ENCODE measurements at regions of chr6 and their contacts with region 1.

Region 1: DNA sequence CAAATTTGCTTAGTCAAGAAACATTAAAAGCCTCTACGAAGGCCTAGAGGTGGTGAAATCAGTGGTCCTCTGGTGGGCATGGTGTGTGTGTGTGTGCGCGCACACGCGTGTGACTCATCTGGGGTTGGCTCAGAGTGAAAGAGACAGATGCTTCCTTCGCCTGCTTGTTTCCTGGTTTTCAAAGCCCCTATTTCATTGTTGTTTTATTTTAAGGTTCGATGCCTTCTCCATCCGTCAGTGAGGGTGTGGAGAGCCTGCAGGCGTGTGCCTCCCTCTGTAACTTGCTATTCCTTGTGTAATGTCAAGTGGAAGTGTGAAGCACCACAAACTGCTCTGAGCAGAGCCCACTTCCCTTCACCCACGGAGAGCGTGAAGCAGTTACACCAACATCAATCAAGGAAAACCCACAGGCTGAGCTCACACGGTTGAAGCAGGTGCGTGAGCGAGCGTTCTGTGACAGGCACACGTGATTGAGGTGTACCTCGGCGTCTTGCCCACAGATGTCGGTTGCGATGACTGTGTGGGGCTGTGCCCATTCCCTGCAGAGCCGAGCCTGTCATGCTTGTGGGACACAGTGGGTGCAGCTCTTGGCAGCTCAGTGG is 233.9 kb downstream of the PRL start:
- DNase-seq: peak; percentile 68
- H3K4me3 Mint-ChIP-seq: peak overlapping the region; percentile 67
- H3K27ac Mint-ChIP-seq: peak overlapping the region; percentile 97
- H3K4me1 Mint-ChIP-seq: peaks cover 69% of the 10 kb centered on the region
- H3K27me3 Mint-ChIP-seq: no peaks in the 10 kb centered on the region

Region 2: GRCh38 chr6:20589266-20589665 is 1473.6 kb before region 1 on chr6:
- intact Hi-C with region 1: loop called (anchors 10 kb)
- DNase-seq: no peak
- H3K4me3 Mint-ChIP-seq: no peak overlapping the region
- H3K27ac Mint-ChIP-seq: no peak overlapping the region
- H3K4me1 Mint-ChIP-seq: peaks cover 26% of the 10 kb centered on the region
- H3K27me3 Mint-ChIP-seq: no peaks in the 10 kb centered on the region

Region 3: GRCh38 chr6:21664314-21665109 is 398.4 kb before region 1 on chr6:
- intact Hi-C with region 1: loop called (anchors 10 kb)
- DNase-seq: no peak
- H3K4me3 Mint-ChIP-seq: peak overlapping the region; percentile 75
- H3K27ac Mint-ChIP-seq: no peak overlapping the region
- H3K4me1 Mint-ChIP-seq: peaks cover 16% of the 10 kb centered on the region
- H3K27me3 Mint-ChIP-seq: peaks cover 62% of the 10 kb centered on the region

Region 4: DNA sequence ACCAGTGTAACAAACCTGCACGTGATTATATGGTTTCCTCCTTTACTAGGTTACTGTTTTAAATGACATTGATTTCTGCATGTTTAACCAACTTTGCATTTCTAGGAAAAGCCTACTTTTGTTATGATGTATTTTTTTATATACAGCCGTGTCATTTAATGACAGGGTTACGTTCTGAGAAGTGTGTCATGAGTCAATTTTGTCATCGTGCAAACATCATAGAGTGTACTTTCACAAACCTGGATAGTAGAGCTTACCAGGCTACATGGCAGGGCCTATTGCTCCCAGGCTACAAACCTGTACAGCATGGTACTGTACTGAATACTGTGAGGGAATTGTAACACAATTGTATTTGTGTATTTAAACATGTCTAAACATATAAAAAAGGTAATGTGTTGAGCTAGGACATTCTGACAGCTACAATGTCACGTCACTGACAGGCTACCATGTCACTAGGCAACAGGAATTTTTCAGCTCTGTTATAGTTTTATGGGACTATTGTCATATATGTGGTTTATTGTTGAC is 28.6 kb after region 1 on chr6:
- intact Hi-C with region 1: loop called (anchors 1 kb)
- DNase-seq: no peak
- H3K4me3 Mint-ChIP-seq: no peak overlapping the region
- H3K27ac Mint-ChIP-seq: peak overlapping the region; percentile 57
- H3K4me1 Mint-ChIP-seq: peaks cover 18% of the 10 kb centered on the region
- H3K27me3 Mint-ChIP-seq: no peaks in the 10 kb centered on the region

Region 5: DNA sequence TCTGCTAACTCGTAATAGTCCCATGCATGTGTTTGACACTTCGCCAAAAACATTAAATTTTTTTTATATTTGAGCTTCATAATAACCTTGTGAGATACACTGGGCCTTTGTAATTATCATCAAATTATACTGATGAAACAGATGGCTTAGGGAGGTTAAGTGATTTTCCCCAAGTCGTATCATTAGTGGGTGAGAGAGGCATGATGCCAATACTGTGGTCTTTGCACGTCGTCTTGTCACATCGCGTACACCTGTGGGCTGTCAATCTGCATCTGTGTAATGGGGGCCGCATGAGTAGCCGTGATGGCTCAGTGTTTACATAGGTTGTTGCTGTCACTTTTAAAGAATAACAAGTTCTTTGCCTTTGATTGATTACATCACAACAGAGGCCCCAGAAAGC is 232.2 kb after region 1 on chr6:
- intact Hi-C with region 1: no loop called
- DNase-seq: no peak
- H3K4me3 Mint-ChIP-seq: no peak overlapping the region
- H3K27ac Mint-ChIP-seq: no peak overlapping the region
- H3K4me1 Mint-ChIP-seq: no peaks in the 10 kb centered on the region
- H3K27me3 Mint-ChIP-seq: peaks cover 2% of the 10 kb centered on the region

Region 6: GRCh38 chr6:23174781-23175361 is 1112.0 kb after region 1 on chr6:
- intact Hi-C with region 1: loop called (anchors 10 kb)
- DNase-seq: no peak
- H3K4me3 Mint-ChIP-seq: no peak overlapping the region
- H3K27ac Mint-ChIP-seq: no peak overlapping the region
- H3K4me1 Mint-ChIP-seq: no peaks in the 10 kb centered on the region
- H3K27me3 Mint-ChIP-seq: no peaks in the 10 kb centered on the region